K562 (cell line): ENCODE measurements at regions of chr15 and their contacts with region 1.

Region 1: DNA sequence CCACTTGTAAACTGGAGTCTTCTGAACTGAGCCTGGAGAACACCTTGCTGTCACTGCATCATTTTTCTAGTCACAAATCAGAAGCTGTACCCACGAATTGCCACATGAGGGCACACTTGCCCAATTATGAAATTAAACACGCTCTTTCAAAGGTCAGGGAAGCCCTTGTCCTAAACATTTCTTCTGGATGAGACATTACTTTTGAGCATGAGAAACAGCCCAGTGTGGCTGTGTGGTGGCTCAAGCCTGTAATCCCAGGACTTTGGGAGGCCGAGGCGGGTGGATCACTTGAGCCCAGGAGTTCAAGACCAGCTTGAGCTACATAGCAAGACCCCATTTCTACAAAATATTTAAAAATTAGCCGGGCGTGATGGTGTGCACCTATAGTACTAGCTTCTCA is 27.5 kb upstream of the CFAP161 start:
- DNase-seq: peak; percentile 49 to 86 (median 62)
- ATAC-seq: peak; percentile 76
- H3K4me3 ChIP-seq: no peak overlapping the region
- H3K27ac ChIP-seq: peak overlapping the region; percentile 69
- H3K4me1 ChIP-seq: peaks cover 8 to 24% of the 10 kb centered on the region in 2 experiments
- H3K27me3 ChIP-seq: no peaks in the 10 kb centered on the region
- CTCF ChIP-seq: peak; percentile 75 to 89 (median 76)
- EP300 ChIP-seq: no peak
- POLR2A ChIP-seq: no peak
- RAD21 ChIP-seq: peak; percentile 72 to 81

Region 2: DNA sequence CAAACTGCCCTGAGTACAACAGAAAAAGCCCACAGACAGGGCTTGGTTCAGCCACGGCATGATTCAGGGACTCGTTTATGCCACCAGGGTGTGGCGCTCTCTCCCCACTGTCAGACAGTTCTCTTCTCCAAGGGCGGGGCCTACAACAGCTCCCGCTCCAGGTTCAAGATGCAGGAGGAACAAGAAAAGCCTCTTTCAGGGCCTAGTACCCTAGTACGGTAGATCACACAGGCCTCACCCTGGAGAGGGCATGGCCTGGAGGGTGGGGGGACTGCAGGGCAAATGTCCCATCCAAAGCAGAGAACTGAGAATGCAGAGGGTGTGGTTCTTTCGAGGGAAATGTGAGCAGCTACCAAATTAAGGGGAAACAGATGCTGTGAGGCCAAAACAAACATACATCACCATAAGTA is 128.9 kb before region 1 on chr15:
- CTCF ChIA-PET with region 1: interaction called, 15 read pairs
- POLR2A ChIA-PET with region 1: no interaction called
- in situ Hi-C with region 1: no loop called
- intact Hi-C with region 1: loop called (anchors 1 kb)
- DNase-seq: peak; percentile 77 to 87 (median 80)
- ATAC-seq: peak; percentile 99
- H3K4me3 ChIP-seq: no peak overlapping the region
- H3K27ac ChIP-seq: no peak overlapping the region
- H3K4me1 ChIP-seq: peaks cover 0 to 3% of the 10 kb centered on the region in 2 experiments; a peak in 2 of 5 replicates
- H3K27me3 ChIP-seq: no peaks in the 10 kb centered on the region
- CTCF ChIP-seq: peak; percentile 92 to 95 (median 92)
- EP300 ChIP-seq: no peak
- POLR2A ChIP-seq: no peak
- RAD21 ChIP-seq: peak; percentile 88 to 94

Region 3: GRCh38 chr15:81155375-81156218 is 49.0 kb after region 1 on chr15:
- CTCF ChIA-PET with region 1: interaction called, 3 read pairs
- POLR2A ChIA-PET with region 1: interaction called, 3 read pairs
- in situ Hi-C with region 1: no loop called
- intact Hi-C with region 1: loop called (anchors 2 kb)
- DNase-seq: peak; percentile 37 to 72 (median 53)
- ATAC-seq: peak; percentile 86
- H3K4me3 ChIP-seq: no peak overlapping the region
- H3K27ac ChIP-seq: no peak overlapping the region
- H3K4me1 ChIP-seq: no peaks in the 10 kb centered on the region; a peak in 3 of 5 replicates
- H3K27me3 ChIP-seq: no peaks in the 10 kb centered on the region
- CTCF ChIP-seq: peak; percentile 67 to 86 (median 71)
- EP300 ChIP-seq: no peak
- POLR2A ChIP-seq: no peak
- RAD21 ChIP-seq: peak; percentile 80 to 87

Region 4: DNA sequence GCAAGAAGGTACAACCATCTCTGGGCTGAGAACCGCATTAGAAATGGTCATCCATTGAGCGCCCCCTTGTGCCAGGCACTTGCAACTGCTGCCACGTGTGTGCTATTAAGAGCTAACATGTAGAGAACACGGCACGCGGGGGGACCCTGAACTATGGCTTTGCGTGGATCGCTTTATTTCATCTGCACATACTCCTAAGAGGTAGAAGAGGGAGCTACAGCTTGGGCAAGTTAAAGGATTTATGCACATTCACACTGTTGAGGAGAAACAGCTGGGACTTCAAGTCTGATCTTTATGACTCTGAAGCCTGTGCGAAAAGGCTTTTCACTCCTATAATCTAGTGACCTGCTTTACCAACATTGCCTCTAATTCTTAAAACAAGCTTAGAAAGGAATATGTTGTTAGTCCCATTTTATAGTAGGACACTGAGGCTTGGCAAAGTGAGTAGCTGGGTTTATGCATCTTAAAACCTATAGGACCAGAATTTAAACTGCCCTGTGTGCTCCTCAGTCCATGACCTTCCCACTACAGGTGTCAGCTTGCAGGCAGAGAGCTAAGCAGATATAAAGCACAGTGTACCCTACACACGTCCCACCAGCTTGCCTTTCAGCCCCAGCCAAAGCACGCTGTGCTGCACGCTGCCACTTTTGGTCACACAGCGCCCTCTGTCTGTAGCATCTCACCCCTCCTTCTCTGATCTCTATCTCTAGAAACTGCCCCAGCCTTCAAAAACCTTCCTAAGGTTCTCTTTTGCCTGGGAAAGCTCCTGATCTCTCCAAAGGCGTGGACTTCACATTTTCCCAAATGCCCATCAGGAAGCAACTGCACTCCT is 159.6 kb after region 1 on chr15:
- CTCF ChIA-PET with region 1: interaction called, 53 read pairs
- POLR2A ChIA-PET with region 1: interaction called, 3 read pairs
- in situ Hi-C with region 1: loop called (anchors 5 kb)
- intact Hi-C with region 1: loop called (anchors 1 kb)
- DNase-seq: peak; percentile 90 to 92 (median 90)
- ATAC-seq: peak; percentile 98
- H3K4me3 ChIP-seq: no peak overlapping the region
- H3K27ac ChIP-seq: peak overlapping the region; percentile 63
- H3K4me1 ChIP-seq: peaks cover 2 to 13% of the 10 kb centered on the region in 2 experiments; a peak in 3 of 5 replicates
- H3K27me3 ChIP-seq: no peaks in the 10 kb centered on the region
- CTCF ChIP-seq: peak; percentile 91 to 96 (median 91)
- EP300 ChIP-seq: 0 out of 2 replicates have a peak, but pooled peaks have one; percentile 28
- POLR2A ChIP-seq: 0 out of 2 replicates have a peak, but pooled peaks have one; percentile 36
- RAD21 ChIP-seq: peak; percentile 92 to 95